ENCODE measurements at regions of chr17 and their contacts with region 1.

Region 1: DNA sequence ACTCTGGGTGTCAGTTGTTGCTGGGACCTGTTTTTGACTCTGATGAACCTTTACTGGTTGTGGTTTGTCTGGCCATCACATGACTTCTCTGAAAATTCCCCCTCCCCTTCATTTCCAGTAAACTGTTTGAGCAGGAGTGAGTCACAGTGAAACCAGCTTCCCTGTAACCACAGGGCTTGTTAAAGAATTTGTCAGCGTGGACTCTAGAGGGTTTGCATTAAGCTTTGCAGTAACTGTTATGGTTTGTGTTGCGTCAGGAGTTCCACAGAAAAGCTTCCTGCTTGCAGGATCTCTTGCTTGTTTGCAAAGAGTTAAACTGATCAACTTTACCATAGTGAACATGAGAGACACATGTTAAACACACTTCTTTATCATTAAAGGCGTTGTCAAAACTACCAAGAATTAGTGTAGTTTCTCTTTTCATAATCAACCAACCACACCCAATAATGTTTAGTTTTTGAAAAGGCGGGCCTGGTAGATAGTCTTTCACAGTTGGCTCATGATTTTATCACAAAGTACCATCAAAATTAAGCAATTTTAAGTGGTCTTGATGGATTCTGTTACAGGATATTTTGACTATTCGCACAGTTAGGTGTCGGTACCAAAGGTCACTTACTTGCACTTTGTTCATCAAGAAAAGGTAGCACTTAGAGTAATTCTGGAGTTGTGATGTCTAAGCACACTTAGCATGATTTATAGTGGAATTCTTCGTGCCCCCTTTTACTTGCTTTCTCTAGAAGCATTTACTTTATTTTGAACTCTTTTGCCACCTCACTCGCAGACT is 79.3 kb downstream of the VMP1 start:
- DNase-seq: peak; percentile 98
- H3K4me3 ChIP-seq: peak overlapping the region in 1 of 3 experiments; percentile 25
- H3K27ac ChIP-seq: peak overlapping the region; percentile 98
- H3K4me1 ChIP-seq: peaks cover 61% of the 10 kb centered on the region
- H3K27me3 ChIP-seq: no peaks in the 10 kb centered on the region
- CTCF ChIP-seq: no peak
- POLR2A ChIP-seq: peak; percentile 53

Region 2: DNA sequence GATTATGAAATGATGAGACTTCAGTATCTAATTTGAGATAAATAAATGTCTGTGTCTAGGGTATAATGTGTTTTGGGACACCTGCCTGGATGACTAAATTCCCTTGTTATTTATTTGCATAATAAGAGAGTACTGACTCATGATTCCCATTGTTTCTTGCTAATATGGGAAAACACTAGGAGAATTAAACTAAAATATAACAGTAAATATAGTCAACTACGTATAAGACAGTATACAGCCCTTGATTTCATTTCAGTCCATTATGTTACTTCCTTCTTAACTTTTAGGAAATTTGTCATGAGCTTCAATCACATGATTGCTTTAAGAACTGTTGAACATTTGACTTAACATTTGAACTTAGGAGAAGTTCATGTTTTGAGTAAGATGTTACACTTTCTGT is 16.8 kb before region 1 on chr17:
- CTCF ChIA-PET with region 1: interaction called, 9 read pairs
- POLR2A ChIA-PET with region 1: interaction called, 4 read pairs
- dilution Hi-C with region 1: no loop called
- intact Hi-C with region 1: loop called (anchors 1 kb)
- DNase-seq: peak; percentile 89
- H3K4me3 ChIP-seq: peak overlapping the region in 1 of 3 experiments; percentile 11
- H3K27ac ChIP-seq: peak overlapping the region; percentile 98
- H3K4me1 ChIP-seq: peaks cover 53% of the 10 kb centered on the region
- H3K27me3 ChIP-seq: no peaks in the 10 kb centered on the region
- CTCF ChIP-seq: no peak
- POLR2A ChIP-seq: no peak

Region 3: DNA sequence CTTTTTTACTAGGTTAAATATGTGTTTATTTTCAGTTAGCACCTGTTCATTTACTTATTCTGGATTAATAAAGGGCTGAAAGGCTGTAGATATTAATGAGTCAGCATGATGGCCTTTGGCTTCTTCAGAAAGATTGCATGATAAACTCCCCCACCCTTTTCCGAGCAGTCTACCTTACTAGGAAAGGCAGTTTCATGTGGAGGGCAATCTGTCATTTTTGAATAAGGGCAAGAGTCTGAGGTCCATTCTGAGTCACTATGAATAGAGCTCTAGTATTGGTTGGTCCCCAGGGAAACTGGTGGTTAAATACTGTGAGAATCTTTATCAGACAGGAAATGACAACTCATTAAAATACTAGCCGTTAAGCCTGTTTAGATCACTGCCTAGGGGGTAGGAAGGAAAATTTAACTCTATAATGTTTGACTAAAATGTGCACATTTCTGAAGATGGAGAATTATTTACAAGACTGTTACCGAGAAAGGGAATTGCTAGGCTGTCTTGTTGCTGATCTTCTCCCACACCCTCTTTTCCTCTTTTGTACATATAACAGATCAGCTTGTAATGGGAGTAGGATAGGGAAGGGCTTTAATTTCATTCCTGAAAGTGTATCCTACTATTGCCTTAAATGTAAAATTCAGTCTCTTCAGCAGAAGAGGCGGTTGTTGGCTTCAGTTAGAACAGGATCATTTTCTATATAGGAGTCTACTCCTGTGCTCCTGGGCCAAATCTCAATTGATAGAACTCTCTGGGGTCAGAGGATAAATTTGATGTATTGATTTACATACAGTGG is 42.7 kb after region 1 on chr17:
- CTCF ChIA-PET with region 1: interaction called, 5 read pairs
- POLR2A ChIA-PET with region 1: interaction called, 7 read pairs
- dilution Hi-C with region 1: no loop called
- intact Hi-C with region 1: loop called (anchors 1 kb)
- DNase-seq: peak; percentile 99
- H3K4me3 ChIP-seq: peak overlapping the region in 1 of 3 experiments; percentile 28
- H3K27ac ChIP-seq: peak overlapping the region; percentile 97
- H3K4me1 ChIP-seq: peaks cover 32% of the 10 kb centered on the region
- H3K27me3 ChIP-seq: no peaks in the 10 kb centered on the region
- CTCF ChIP-seq: no peak
- POLR2A ChIP-seq: peak; percentile 15

Region 4: GRCh38 chr17:59837308-59838051 is 50.8 kb after region 1 on chr17:
- CTCF ChIA-PET with region 1: interaction called, 6 read pairs
- POLR2A ChIA-PET with region 1: interaction called, 45 read pairs
- dilution Hi-C with region 1: no loop called
- intact Hi-C with region 1: loop called (anchors 1 kb)
- DNase-seq: peak; percentile 99
- H3K4me3 ChIP-seq: peak overlapping the region; percentile 76 to 100 (median 99)
- H3K27ac ChIP-seq: peak overlapping the region; percentile 100
- H3K4me1 ChIP-seq: peaks cover 13% of the 10 kb centered on the region
- H3K27me3 ChIP-seq: no peaks in the 10 kb centered on the region
- CTCF ChIP-seq: no peak
- POLR2A ChIP-seq: peak; percentile 100

Region 5: GRCh38 chr17:59846394-59847165 is 59.9 kb after region 1 on chr17:
- CTCF ChIA-PET with region 1: interaction called, 6 read pairs
- POLR2A ChIA-PET with region 1: interaction called, 12 read pairs
- dilution Hi-C with region 1: no loop called
- intact Hi-C with region 1: loop called (anchors 1 kb)
- DNase-seq: peak; percentile 74
- H3K4me3 ChIP-seq: no peak overlapping the region
- H3K27ac ChIP-seq: peak overlapping the region; percentile 10
- H3K4me1 ChIP-seq: peaks cover 10% of the 10 kb centered on the region
- H3K27me3 ChIP-seq: no peaks in the 10 kb centered on the region
- CTCF ChIP-seq: no peak
- POLR2A ChIP-seq: no peak

Measured in endothelial cell of umbilical vein (primary cell).